ENCODE measurements at regions of chr16 and their contacts with region 1.

Region 1: GRCh38 chr16:14249291-14250032 is 178.3 kb downstream of the MRTFB start:
- DNase-seq: peak in 1 of 2 experiments; percentile 71
- H3K4me3 ChIP-seq: no peak overlapping the region
- H3K27ac ChIP-seq: no peak overlapping the region
- H3K4me1 ChIP-seq: no peaks in the 10 kb centered on the region
- H3K27me3 ChIP-seq: no peaks in the 10 kb centered on the region
- CTCF ChIP-seq: peak in 2 of 3 experiments; percentile 64 to 74; a peak in 3 of 4 replicates
- EP300 ChIP-seq: no peak
- POLR2A ChIP-seq: no peak
- RAD21 ChIP-seq: peak; percentile 80 to 85

Region 2: GRCh38 chr16:14263011-14263410 is 13.5 kb after region 1 on chr16:
- CTCF ChIA-PET with region 1: interaction called, 15 read pairs
- POLR2A ChIA-PET with region 1: no interaction called
- DNase-seq: no peak
- H3K4me3 ChIP-seq: no peak overlapping the region
- H3K27ac ChIP-seq: no peak overlapping the region
- H3K4me1 ChIP-seq: no peaks in the 10 kb centered on the region
- H3K27me3 ChIP-seq: no peaks in the 10 kb centered on the region
- CTCF ChIP-seq: no peak
- EP300 ChIP-seq: no peak
- POLR2A ChIP-seq: no peak
- RAD21 ChIP-seq: no peak